ENCODE measurements at regions of chr20 and their contacts with region 1.

Region 1: DNA sequence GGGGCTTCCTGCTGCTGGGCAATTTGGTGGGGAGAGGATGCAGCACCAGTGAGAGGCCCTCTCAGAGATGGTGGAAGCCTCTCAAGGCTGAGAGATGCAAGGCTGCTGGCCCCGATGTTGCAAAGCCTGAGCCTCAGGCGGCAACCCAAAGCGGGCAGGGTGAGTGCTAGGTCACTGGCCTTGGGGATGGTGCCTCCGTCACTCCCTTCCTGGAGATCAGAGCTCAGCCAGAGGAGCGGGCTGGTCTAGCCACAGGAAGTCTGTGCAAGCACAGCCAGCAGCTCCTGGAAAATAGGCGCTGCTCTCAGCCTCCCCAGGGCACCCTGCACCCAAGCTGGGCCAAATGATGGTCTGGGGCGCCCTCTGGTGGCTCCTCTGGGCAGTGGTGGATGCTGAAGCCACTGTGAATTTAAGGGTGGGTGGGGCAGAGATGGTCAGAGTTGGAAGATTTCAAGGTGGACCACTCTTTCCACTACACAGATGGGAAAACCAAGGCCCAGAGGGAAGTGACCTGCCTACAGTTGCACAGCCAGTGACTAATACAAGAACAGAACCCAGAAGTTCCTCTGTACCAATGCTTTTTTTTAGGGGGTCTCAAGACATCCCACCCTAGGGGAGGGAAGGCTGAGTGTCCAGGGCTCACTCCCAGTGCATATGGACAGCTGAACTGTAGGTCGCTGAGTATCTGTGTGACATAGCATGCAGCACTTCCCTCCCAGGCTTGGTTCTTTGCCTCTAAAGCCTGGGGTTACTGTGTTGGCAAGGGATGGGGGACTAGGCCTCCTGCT is 20.8 kb downstream of the C20orf203 start:
- DNase-seq: peak; percentile 88
- H3K4me3 ChIP-seq: no peak overlapping the region
- H3K27ac ChIP-seq: no peak overlapping the region
- H3K4me1 ChIP-seq: peaks cover 0 to 4% (median 3%) of the 10 kb centered on the region in 4 donors
- H3K27me3 ChIP-seq: no peaks in the 10 kb centered on the region
- CTCF ChIP-seq: peak; percentile 82 to 94 (median 92)
- EP300 ChIP-seq: no peak
- POLR2A ChIP-seq: no peak

Region 2: GRCh38 chr20:32336918-32337347 is 316.0 kb before region 1 on chr20:
- intact Hi-C with region 1: loop called (anchors 10 kb)
- DNase-seq: no peak
- H3K4me3 ChIP-seq: no peak overlapping the region
- H3K27ac ChIP-seq: no peak overlapping the region
- H3K4me1 ChIP-seq: peaks cover 0 to 9% (median 0%) of the 10 kb centered on the region in 4 donors
- H3K27me3 ChIP-seq: no peaks in the 10 kb centered on the region
- CTCF ChIP-seq: peak; percentile 33 to 59 (median 44)
- EP300 ChIP-seq: no peak
- POLR2A ChIP-seq: no peak

Region 3: DNA sequence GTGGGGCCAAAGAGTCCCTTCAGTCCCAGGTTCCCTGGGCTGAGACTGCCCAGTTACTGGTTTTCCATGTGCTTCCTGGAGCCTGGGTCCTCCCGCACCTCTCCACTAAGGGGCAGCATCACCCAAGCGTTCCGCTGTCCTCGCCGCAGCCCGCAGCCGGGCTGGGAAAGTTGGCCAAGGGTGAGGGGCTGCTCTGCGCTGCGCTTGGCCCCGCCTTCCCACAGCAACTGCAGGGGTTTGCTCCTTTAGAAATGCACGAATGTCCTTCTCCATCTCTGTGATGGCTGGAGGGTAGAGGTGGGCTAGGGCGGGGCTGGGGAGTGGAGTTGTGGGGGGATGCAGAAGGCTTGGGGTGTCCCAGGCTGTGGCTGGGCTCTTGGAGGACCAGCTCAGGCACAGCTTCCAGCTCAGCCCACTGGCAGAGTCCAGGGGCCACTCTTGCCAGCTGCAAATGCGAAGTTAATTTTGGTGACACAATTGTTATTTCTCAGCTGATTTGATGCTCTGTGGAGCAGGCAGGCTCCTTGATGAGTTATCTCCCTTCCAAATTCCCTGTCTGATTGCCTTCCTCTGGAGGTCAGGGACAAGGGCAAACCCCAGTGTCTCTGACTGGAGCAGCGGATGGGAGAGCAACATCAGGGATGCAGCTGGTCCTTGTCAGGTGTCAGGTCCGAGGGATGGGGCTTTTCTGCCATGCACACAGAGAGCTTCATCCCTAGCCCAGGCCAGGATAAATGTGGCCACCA is 131.0 kb before region 1 on chr20:
- intact Hi-C with region 1: loop called (anchors 1 kb)
- DNase-seq: peak; percentile 80
- H3K4me3 ChIP-seq: no peak overlapping the region
- H3K27ac ChIP-seq: no peak overlapping the region
- H3K4me1 ChIP-seq: peaks cover 0 to 26% (median 23%) of the 10 kb centered on the region in 4 donors
- H3K27me3 ChIP-seq: no peaks in the 10 kb centered on the region
- CTCF ChIP-seq: peak; percentile 79 to 90 (median 83)
- EP300 ChIP-seq: no peak
- POLR2A ChIP-seq: no peak

Region 4: GRCh38 chr20:32560989-32561830 is 91.7 kb before region 1 on chr20:
- intact Hi-C with region 1: no loop called
- DNase-seq: no peak
- H3K4me3 ChIP-seq: no peak overlapping the region
- H3K27ac ChIP-seq: no peak overlapping the region
- H3K4me1 ChIP-seq: no peaks in the 10 kb centered on the region
- H3K27me3 ChIP-seq: no peaks in the 10 kb centered on the region
- CTCF ChIP-seq: no peak
- EP300 ChIP-seq: no peak
- POLR2A ChIP-seq: no peak

Region 5: DNA sequence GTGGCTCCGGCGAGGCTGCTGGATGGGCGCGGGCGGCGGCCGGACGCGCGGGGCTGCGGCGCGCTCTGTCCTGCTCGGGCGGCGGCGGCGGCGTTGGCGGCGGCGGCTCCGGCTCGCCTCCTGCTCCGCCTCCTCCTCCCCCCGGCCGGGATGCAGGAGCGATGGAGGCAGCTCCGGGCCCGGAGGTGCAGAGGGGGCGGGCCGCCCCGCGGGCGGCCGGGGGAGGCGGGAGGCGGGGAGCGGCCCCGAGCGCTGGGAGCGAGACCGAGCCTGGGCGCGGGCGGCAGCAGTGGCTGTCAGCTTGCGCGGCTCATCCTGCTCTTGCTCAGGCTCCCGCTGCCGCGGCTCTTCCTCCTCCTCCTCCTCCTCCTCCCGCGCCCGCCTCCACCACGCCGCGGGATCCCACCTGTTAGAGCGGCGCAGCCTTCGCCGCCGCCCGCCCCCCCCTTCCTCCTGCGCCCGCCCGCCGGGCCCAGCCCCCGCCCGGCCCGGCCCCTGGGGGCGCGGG is 67.9 kb before region 1 on chr20 and contains the start of gene NOL4L:
- intact Hi-C with region 1: loop called (anchors 5 kb)
- DNase-seq: no peak
- H3K4me3 ChIP-seq: peak within 1 kb of the TSS; percentile 53 to 78 (median 65)
- H3K27ac ChIP-seq: peak within 1 kb of the TSS; percentile 49 to 78 (median 69)
- H3K4me1 ChIP-seq: peaks cover 0 to 27% (median 16%) of the 10 kb centered on the region in 4 donors
- H3K27me3 ChIP-seq: no peaks in the 10 kb centered on the region
- CTCF ChIP-seq: no peak
- EP300 ChIP-seq: no peak
- POLR2A ChIP-seq: no peak
- total RNA-seq, gene NOL4L: 9.2 to 23.8 (median 14.0) TPM

Measured in sigmoid colon (tissue), 7 donors.